Activated naive CD4-positive, alpha-beta T cell treated with anti-CD3 and anti-CD28 coated beads for 36 hours (primary cell): ENCODE measurements at regions of chr7 and their contacts with region 1.

Region 1: GRCh38 chr7:100428967-100429636 is 529 bp upstream of the MEPCE start:
- DNase-seq: peak; percentile 100
- H3K4me3 Mint-ChIP-seq: peak overlapping the region; percentile 93
- H3K27ac Mint-ChIP-seq: peak overlapping the region; percentile 99
- H3K4me1 Mint-ChIP-seq: peaks cover 47% of the 10 kb centered on the region
- H3K27me3 Mint-ChIP-seq: peaks cover 5% of the 10 kb centered on the region

Region 2: GRCh38 chr7:99408379-99409191 is 1020.5 kb before region 1 on chr7 and contains the starts of genes BUD31 and PDAP1:
- CTCF ChIA-PET with region 1: no interaction called
- intact Hi-C with region 1: loop called (anchors 2 kb)
- DNase-seq: peak; percentile 97
- H3K4me3 Mint-ChIP-seq: peak within 1 kb of the TSS; percentile 89
- H3K27ac Mint-ChIP-seq: peak within 1 kb of the TSS; percentile 92
- H3K4me1 Mint-ChIP-seq: peaks cover 49% of the 10 kb centered on the region
- H3K27me3 Mint-ChIP-seq: no peaks in the 10 kb centered on the region
- total RNA-seq, gene BUD31: 160 to 176 TPM
- total RNA-seq, gene PDAP1: 169 to 194 TPM

Region 3: DNA sequence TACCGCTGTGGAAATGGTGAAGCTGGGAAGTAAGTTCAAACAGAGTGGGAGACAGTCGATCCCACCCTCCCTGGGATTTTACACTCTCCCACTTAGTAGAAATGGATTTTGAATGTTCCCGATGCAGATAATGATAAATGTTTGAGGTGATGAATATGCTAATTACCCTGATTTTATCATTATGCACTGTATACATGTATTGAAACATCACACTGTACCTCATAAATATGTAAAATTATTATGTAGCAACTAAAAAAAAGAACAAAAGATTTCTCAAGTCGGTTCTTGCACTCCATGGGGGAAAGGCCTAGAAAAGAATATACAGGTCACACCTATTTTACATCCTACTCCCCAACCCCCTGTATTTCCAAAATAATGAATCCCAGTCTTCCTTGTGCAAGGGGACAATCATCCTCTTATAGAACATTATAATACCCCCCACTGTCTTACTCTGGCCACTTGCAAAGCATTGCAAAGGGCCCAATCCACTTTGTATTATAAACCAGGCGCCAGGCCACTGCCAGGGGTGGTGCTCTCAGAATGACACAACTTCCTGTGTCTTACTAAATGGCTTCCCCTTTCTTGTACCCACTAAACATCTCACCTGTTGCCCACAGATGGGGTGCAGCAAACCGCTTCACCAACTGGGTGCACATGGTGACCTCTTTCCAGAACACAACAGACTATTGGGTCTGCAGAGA is 531.6 kb before region 1 on chr7:
- CTCF ChIA-PET with region 1: no interaction called
- intact Hi-C with region 1: no loop called
- DNase-seq: no peak
- H3K4me3 Mint-ChIP-seq: no peak overlapping the region
- H3K27ac Mint-ChIP-seq: no peak overlapping the region
- H3K4me1 Mint-ChIP-seq: no peaks in the 10 kb centered on the region
- H3K27me3 Mint-ChIP-seq: no peaks in the 10 kb centered on the region

Region 4: DNA sequence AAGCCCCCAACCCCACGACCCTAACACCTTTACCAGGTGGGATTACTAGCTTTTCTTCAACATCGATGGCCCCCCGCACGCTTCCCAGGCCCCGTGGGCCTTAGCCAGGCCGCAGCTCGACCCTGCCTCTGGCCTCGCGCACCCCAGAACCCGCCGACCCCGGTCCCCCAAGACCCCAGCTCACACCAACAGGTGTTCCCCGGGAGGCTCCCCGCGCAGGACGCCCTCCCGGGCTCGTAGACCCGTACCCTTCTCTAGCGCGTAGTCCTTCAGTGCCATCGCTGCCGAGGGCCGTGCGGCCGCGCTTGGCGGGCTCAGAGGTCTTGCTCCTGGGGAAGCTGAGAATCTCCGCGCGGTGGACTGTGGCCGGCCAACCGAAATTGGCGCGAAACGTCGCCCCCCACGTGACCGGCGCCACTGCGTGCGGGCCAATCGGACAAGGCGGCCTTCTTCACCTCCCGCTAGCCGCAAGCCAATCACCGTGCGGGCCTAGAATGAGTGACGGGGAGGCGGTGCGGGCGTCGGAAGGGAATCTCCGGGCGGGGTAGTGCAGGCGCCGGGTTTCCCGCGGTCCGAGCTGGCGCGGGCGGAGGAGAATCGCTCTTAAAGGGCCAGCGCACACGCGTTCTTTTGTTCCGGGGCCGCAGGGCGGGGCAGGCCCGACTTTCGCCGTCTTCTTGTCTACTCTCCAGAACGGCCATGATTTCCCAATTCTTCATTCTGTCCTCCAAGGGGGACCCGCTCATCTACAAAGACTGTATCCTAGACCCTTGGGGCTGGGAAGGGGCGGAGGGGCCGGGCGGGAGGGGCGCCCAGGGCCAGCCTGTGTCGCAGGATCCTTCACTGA is 327.9 kb before region 1 on chr7 and contains the starts of genes AP4M1 and MCM7:
- CTCF ChIA-PET with region 1: no interaction called
- intact Hi-C with region 1: loop called (anchors 1 kb)
- DNase-seq: peak; percentile 98
- H3K4me3 Mint-ChIP-seq: peak within 1 kb of the TSS; percentile 91
- H3K27ac Mint-ChIP-seq: peak within 1 kb of the TSS; percentile 96
- H3K4me1 Mint-ChIP-seq: peaks cover 40% of the 10 kb centered on the region
- H3K27me3 Mint-ChIP-seq: no peaks in the 10 kb centered on the region
- total RNA-seq, gene AP4M1: 12.6 to 12.7 TPM
- total RNA-seq, gene MCM7: 390 to 395 TPM

Region 5: GRCh38 chr7:100221231-100221718 is 207.8 kb before region 1 on chr7:
- CTCF ChIA-PET with region 1: no interaction called
- intact Hi-C with region 1: loop called (anchors 1 kb)
- DNase-seq: peak; percentile 93
- H3K4me3 Mint-ChIP-seq: peak overlapping the region; percentile 97
- H3K27ac Mint-ChIP-seq: peak overlapping the region; percentile 98
- H3K4me1 Mint-ChIP-seq: peaks cover 57% of the 10 kb centered on the region
- H3K27me3 Mint-ChIP-seq: no peaks in the 10 kb centered on the region

Region 6: GRCh38 chr7:100545360-100546128 is 116.4 kb after region 1 on chr7:
- CTCF ChIA-PET with region 1: no interaction called
- intact Hi-C with region 1: loop called (anchors 1 kb)
- DNase-seq: peak; percentile 76
- H3K4me3 Mint-ChIP-seq: peak overlapping the region; percentile 59
- H3K27ac Mint-ChIP-seq: peak overlapping the region; percentile 95
- H3K4me1 Mint-ChIP-seq: peaks cover 94% of the 10 kb centered on the region
- H3K27me3 Mint-ChIP-seq: no peaks in the 10 kb centered on the region

Region 7: GRCh38 chr7:100673300-100673941 is 244.3 kb after region 1 on chr7 and contains the start of gene GNB2:
- CTCF ChIA-PET with region 1: no interaction called
- intact Hi-C with region 1: loop called (anchors 1 kb)
- DNase-seq: peak; percentile 100
- H3K4me3 Mint-ChIP-seq: peak within 1 kb of the TSS; percentile 97
- H3K27ac Mint-ChIP-seq: peak within 1 kb of the TSS; percentile 95
- H3K4me1 Mint-ChIP-seq: peaks cover 17% of the 10 kb centered on the region
- H3K27me3 Mint-ChIP-seq: no peaks in the 10 kb centered on the region
- total RNA-seq, gene GNB2: 221 TPM